ENCODE measurements at regions of chr3 and their contacts with region 1.

Region 1: GRCh38 chr3:18295171-18295920 is 129.8 kb downstream of the SATB1 start:
- DNase-seq: peak; percentile 86 to 90
- H3K4me3 ChIP-seq: no peak overlapping the region
- H3K27ac ChIP-seq: peak overlapping the region; percentile 11; the same call in 1 of the 2 replicates
- H3K4me1 ChIP-seq: peaks cover 9% of the 10 kb centered on the region
- H3K27me3 ChIP-seq: no peaks in the 10 kb centered on the region
- CTCF ChIP-seq: peak; percentile 89

Region 2: DNA sequence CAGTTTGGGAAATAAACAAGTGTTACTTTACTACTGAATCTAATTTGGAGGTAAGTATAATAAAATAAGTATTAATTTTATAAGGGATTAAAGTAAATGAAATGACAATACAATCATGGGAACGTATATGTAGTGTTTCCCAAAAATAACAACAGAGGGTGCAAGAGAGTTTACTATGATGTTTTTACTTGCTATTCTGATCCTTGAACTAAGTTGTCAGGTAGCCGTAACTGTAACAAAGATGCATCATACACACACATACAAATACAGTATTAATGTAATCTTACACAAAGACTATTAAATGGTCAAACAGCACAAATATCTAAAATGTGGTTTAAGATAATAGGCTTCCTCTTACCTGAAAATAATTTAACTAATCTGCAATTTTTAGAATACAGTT is 864.3 kb before region 1 on chr3:
- CTCF ChIA-PET with region 1: no interaction called
- POLR2A ChIA-PET with region 1: no interaction called
- intact Hi-C with region 1: loop called (anchors 5 kb)
- DNase-seq: no peak
- H3K4me3 ChIP-seq: no peak overlapping the region
- H3K27ac ChIP-seq: no peak overlapping the region
- H3K4me1 ChIP-seq: peaks cover 13% of the 10 kb centered on the region
- H3K27me3 ChIP-seq: no peaks in the 10 kb centered on the region
- CTCF ChIP-seq: peak; percentile 70

Region 3: GRCh38 chr3:17841190-17841828 is 454.0 kb before region 1 on chr3:
- CTCF ChIA-PET with region 1: interaction called, 5 read pairs
- POLR2A ChIA-PET with region 1: no interaction called
- intact Hi-C with region 1: loop called (anchors 1 kb)
- DNase-seq: peak in 1 of 2 experiments; percentile 57
- H3K4me3 ChIP-seq: no peak overlapping the region
- H3K27ac ChIP-seq: no peak overlapping the region
- H3K4me1 ChIP-seq: no peaks in the 10 kb centered on the region
- H3K27me3 ChIP-seq: no peaks in the 10 kb centered on the region
- CTCF ChIP-seq: peak; percentile 95

Region 4: DNA sequence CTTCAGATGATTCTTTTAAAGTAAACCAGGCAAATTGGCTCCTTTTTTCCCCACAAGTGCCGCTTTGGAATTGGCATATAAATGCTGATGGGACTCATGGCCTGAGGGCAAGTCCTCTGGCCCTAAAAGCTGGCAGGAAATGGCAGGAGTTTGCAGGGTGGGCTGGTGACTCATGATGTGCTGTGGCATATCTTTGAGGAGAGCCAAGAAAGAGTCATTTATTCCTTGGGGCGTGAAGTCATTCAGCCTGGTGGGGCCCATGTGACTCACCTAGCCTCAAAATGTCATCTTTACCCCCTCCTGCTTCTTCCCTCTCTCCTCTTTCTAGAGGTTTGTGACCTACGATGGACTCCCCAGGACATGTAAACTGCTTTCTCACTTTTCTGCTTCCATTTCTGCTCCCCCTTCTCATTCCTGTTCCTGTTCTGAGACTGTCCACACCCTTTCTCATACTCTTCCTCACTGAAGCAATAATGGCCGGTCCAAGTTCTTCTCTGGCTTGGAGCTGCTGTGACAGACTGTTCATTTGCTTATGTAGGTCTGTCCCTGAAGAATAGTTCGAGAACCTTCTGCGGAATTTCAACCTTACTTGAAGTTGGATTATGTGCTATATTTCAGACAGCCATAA is 196.3 kb before region 1 on chr3:
- CTCF ChIA-PET with region 1: no interaction called
- POLR2A ChIA-PET with region 1: no interaction called
- intact Hi-C with region 1: loop called (anchors 1 kb)
- DNase-seq: peak; percentile 84 to 88
- H3K4me3 ChIP-seq: 0 out of 2 replicates have a peak overlapping the region, but pooled peaks have one; percentile 18
- H3K27ac ChIP-seq: peak overlapping the region; percentile 79
- H3K4me1 ChIP-seq: peaks cover 40% of the 10 kb centered on the region
- H3K27me3 ChIP-seq: no peaks in the 10 kb centered on the region
- CTCF ChIP-seq: no peak

Region 5: GRCh38 chr3:18234717-18235335 is 60.5 kb before region 1 on chr3:
- CTCF ChIA-PET with region 1: no interaction called
- POLR2A ChIA-PET with region 1: no interaction called
- intact Hi-C with region 1: loop called (anchors 1 kb)
- DNase-seq: peak; percentile 32 to 72
- H3K4me3 ChIP-seq: no peak overlapping the region
- H3K27ac ChIP-seq: no peak overlapping the region
- H3K4me1 ChIP-seq: peaks cover 28% of the 10 kb centered on the region
- H3K27me3 ChIP-seq: no peaks in the 10 kb centered on the region
- CTCF ChIP-seq: no peak

Measured in PC-9 (cell line).